Activated T-helper 1 cell treated with anti-CD3 and anti-CD28 coated beads, Interleukin-12 subunit alpha, Interleukin-12 subunit beta, Interleukin-2, Interleukin-4 antibody, amounts not matched to agents 30 ng/mL and 10 ng/mL and 1 ng/mL, durations not matched to agents 14 hours and 24 hours and 36 hours (primary cell): ENCODE measurements at regions of chr10 and their contacts with region 1.

Region 1: GRCh38 chr10:91082447-91082846 is 138.0 kb upstream of the PCGF5 start:
- DNase-seq: no peak
- H3K4me3 Mint-ChIP-seq: no peak overlapping the region
- H3K27ac Mint-ChIP-seq: no peak overlapping the region
- H3K4me1 Mint-ChIP-seq: no peaks in the 10 kb centered on the region
- H3K27me3 Mint-ChIP-seq: peaks cover 23% of the 10 kb centered on the region

Region 2: DNA sequence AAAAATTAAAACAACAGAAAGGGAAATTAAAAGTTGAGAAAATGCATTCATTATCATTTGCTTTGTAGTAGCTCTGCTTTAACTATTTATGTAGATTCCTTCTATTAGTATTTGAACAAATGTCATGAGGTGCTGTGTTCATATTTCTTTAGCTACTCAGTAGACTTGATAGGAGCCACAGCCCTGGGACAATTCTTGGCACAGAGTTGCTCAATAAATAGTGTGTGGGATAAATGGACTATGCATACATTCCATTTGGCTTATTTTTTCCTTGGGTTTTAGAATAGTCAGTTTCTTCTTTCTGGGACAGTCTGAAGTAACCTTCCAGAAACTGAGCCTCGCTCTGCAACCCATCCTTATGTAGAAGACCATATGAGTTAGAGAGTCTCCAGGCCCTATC is 197.3 kb before region 1 on chr10:
- intact Hi-C with region 1: loop called (anchors 5 kb)
- DNase-seq: no peak
- H3K4me3 Mint-ChIP-seq: no peak overlapping the region
- H3K27ac Mint-ChIP-seq: no peak overlapping the region
- H3K4me1 Mint-ChIP-seq: no peaks in the 10 kb centered on the region
- H3K27me3 Mint-ChIP-seq: no peaks in the 10 kb centered on the region

Region 3: DNA sequence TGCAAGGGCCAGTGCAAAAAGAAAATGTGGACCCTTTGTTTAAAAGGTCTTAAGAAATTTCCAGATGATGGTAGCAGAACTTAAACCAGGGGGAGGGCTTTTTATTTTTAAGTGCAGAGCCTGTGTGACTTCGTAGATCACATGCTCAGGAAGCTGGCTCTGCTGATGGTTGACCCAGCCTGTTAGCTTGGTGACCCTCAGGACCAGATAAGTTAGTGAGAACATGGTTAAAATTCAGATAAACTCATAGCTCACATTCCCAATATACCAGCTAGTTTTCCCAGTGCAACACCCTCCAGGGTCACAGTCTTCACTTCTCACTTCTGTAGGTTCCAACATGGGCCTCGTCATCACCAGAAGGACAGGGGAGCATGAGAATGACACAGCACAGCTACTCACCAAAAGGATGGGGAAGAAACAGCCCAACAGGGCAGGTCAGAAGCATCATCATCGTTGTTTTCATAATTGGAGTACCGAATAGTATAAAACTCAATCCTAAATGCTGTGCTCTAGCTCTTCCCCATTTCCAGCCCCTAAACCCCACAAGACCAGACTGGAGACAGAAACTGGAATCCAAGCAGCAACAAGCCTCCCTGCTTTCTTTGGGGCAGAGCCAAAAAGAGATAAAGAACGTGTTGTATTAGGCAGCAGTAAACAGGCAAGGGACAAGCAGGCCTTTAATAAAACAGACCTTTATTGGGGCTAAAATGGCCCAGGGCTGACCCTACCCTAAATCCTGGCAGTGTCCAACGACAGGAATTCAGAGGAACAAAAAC is 59.3 kb before region 1 on chr10:
- intact Hi-C with region 1: no loop called
- DNase-seq: no peak
- H3K4me3 Mint-ChIP-seq: no peak overlapping the region
- H3K27ac Mint-ChIP-seq: no peak overlapping the region
- H3K4me1 Mint-ChIP-seq: no peaks in the 10 kb centered on the region
- H3K27me3 Mint-ChIP-seq: peaks cover 23% of the 10 kb centered on the region

Region 4: GRCh38 chr10:91242940-91243339 is 160.5 kb after region 1 on chr10:
- intact Hi-C with region 1: no loop called
- DNase-seq: no peak
- H3K4me3 Mint-ChIP-seq: no peak overlapping the region
- H3K27ac Mint-ChIP-seq: no peak overlapping the region
- H3K4me1 Mint-ChIP-seq: peaks cover 20% of the 10 kb centered on the region
- H3K27me3 Mint-ChIP-seq: no peaks in the 10 kb centered on the region